Activated CD8-positive, alpha-beta T cell treated with anti-CD3 and anti-CD28 coated beads for 36 hours (primary cell): ENCODE measurements at regions of chr16 and their contacts with region 1.

Region 1: DNA sequence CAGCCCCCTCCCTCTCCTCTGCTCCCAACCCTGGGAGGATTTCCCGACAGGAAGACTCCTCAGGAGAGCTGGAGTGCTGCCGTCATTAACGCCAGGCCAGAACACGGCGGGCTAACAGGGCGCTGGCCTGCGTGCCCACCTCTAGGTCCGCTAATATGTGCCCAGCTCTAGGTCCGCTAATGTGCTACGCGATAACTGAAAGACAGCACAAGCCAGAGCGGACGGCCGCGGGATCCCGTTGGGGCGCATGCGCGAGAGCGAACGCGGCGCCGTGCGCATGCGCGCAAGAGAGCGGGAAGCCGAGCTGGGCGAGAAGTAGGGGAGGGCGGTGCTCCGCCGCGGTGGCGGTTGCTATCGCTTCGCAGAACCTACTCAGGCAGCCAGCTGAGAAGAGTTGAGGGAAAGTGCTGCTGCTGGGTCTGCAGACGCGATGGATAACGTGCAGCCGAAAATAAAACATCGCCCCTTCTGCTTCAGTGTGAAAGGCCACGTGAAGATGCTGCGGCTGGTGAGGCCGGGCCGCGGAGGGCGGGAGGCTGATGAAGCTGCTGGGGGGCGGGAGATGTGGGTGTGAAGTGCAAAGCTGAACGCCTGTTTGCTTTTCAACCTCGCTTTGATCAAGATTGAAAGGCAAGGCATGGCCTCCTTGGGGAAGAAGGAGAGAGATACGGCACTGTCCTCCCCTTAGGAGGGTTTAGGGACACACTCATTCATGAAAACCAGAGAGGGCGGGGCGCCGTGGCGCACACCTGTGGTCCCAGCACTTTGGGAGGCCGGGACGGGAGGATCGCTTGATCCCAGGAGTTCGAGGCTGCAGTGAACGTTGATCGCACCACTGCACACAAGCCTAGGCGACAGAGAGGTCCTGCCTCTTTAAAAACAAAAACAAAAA is at the start of gene CKLF:
- DNase-seq: peak; percentile 90
- ATAC-seq: peak; percentile 76
- H3K4me3 Mint-ChIP-seq: peak within 1 kb of the TSS; percentile 88
- H3K27ac Mint-ChIP-seq: peak within 1 kb of the TSS; percentile 92
- H3K4me1 Mint-ChIP-seq: peaks cover 63% of the 10 kb centered on the region
- H3K27me3 Mint-ChIP-seq: no peaks in the 10 kb centered on the region
- CTCF ChIP-seq: no peak
- total RNA-seq, gene CKLF: 99.0 to 99.7 TPM

Region 2: GRCh38 chr16:66516808-66517585 is 35.5 kb before region 1 on chr16:
- CTCF ChIA-PET with region 1: interaction called, 41 read pairs
- POLR2A ChIA-PET with region 1: interaction called, 78 read pairs
- intact Hi-C with region 1: loop called (anchors 2 kb)
- DNase-seq: peak; percentile 94
- ATAC-seq: peak; percentile 91
- H3K4me3 Mint-ChIP-seq: peak overlapping the region; percentile 78
- H3K27ac Mint-ChIP-seq: peak overlapping the region; percentile 97
- H3K4me1 Mint-ChIP-seq: peaks cover 62% of the 10 kb centered on the region
- H3K27me3 Mint-ChIP-seq: no peaks in the 10 kb centered on the region
- CTCF ChIP-seq: no peak

Region 3: DNA sequence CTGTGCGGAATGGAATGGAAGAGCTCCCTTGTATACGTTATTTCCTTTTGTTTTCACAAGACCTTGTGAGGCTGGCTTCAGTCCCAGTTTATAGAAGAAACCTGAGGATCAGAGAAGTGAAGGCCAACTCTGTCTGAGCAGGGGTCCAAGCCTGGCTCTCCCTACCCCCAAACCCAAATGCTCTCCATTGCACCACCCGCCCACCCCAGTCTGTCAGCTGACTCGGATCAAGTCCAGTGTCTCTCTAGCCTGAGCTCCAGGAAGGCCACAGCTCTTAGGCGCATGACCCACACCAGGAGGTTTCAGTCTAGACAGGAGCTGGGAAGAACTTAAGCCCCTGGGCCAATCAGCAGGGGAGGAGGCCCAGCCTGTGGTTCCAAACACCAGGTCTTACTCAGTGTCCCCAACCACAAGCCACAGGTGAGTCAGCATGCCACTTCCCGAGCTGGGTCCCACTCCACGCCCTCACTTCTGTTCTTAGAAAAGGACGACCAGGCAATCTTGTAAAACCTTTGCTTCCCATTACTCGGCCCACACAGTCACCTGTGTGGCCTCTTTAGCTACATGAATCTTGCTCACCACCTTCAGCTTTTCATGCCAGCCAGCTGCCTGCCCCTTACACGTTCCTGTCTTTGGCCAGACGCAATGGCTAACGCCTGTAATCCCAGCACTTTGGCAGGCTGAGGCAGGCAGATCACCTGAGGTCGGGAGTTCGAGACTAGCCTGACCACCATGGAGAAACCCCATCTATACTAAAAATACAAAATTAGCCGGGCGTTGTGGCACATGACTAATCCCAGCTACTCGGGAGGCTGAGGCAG is 30.4 kb before region 1 on chr16:
- CTCF ChIA-PET with region 1: interaction called, 41 read pairs
- POLR2A ChIA-PET with region 1: interaction called, 78 read pairs
- intact Hi-C with region 1: loop called (anchors 2 kb)
- DNase-seq: peak; percentile 98
- ATAC-seq: peak; percentile 82
- H3K4me3 Mint-ChIP-seq: peak overlapping the region; percentile 42
- H3K27ac Mint-ChIP-seq: peak overlapping the region; percentile 88
- H3K4me1 Mint-ChIP-seq: peaks cover 74% of the 10 kb centered on the region
- H3K27me3 Mint-ChIP-seq: no peaks in the 10 kb centered on the region
- CTCF ChIP-seq: no peak

Region 4: DNA sequence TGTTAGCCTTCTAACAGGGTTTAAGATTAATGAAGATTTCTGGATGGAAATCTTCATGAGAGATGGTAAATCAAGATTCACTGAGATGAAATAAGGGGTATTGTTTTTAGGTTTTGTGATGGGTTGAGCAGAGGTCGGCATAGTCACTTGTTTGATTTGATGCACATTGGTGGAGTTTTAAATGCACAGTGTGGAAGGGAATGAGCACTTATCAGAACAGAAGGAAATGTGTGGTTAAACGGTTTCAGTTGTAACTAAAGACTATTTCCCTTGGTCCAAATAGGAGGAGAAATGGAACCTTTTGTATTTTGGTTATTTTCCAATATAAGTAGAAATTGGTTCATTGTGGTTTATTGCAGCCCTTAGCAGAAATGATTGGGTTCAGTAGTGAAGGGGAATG is 510.5 kb after region 1 on chr16:
- CTCF ChIA-PET with region 1: no interaction called
- POLR2A ChIA-PET with region 1: no interaction called
- intact Hi-C with region 1: no loop called
- DNase-seq: no peak
- ATAC-seq: no peak
- H3K4me3 Mint-ChIP-seq: no peak overlapping the region
- H3K27ac Mint-ChIP-seq: peak overlapping the region; percentile 3
- H3K4me1 Mint-ChIP-seq: peaks cover 9% of the 10 kb centered on the region
- H3K27me3 Mint-ChIP-seq: no peaks in the 10 kb centered on the region
- CTCF ChIP-seq: no peak